ENCODE measurements at regions of chr11 and their contacts with region 1.

Region 1: GRCh38 chr11:76807206-76807875 is 24.2 kb downstream of the TSKU start:
- DNase-seq: peak; percentile 85 to 86
- H3K4me3 ChIP-seq: no peak overlapping the region
- H3K4me3 Mint-ChIP-seq: no peak overlapping the region
- H3K27ac Mint-ChIP-seq: no peak overlapping the region
- H3K4me1 ChIP-seq: peaks cover 8% of the 10 kb centered on the region
- H3K4me1 Mint-ChIP-seq: peaks cover under 1% of the 10 kb centered on the region
- H3K27me3 ChIP-seq: no peaks in the 10 kb centered on the region
- H3K27me3 Mint-ChIP-seq: no peaks in the 10 kb centered on the region
- CTCF ChIP-seq: peak; percentile 86 to 87

Region 2: DNA sequence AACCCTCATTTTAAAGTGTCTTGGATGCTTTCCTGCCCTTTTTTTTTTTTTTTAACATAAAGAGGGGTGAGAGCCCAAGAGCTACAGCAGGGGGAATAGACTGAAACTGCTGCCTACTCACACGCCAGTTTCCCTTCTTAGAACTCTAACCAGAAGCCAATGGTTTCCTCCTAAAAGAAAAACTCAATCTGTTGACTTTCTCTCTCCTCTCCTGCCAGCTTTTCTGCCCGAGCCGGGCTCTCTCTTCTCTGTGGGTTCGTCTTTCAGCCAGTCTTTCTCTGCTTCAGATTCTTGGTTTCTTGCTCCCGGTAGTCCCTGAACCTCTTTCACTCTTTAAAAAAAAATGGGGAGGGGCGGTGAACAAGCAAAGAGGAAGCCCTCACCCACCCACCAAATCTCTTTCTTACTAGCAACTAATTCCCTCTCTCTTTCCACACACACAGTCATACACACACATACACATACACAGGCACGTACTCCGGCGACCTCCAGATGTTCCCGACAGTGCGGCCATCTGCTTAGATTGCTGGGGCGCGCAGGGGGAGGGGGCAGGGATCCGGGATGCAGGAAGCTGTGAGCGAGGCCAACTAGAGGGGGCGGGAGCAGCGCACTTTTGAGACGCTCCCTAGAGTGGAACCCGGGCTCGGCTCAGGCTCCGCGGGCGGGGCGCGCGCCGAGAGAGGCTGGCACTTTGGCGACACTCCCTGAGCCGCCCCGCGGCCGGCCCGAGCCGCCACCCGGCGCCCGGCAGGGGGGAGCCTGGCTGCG is 24.6 kb before region 1 on chr11:
- CTCF ChIA-PET with region 1: no interaction called
- POLR2A ChIA-PET with region 1: no interaction called
- intact Hi-C with region 1: no loop called
- DNase-seq: peak; percentile 98
- H3K4me3 ChIP-seq: peak overlapping the region; percentile 85
- H3K4me3 Mint-ChIP-seq: peak overlapping the region; percentile 79
- H3K27ac Mint-ChIP-seq: peak overlapping the region; percentile 71
- H3K4me1 ChIP-seq: peaks cover 31% of the 10 kb centered on the region
- H3K4me1 Mint-ChIP-seq: peaks cover 46% of the 10 kb centered on the region
- H3K27me3 ChIP-seq: no peaks in the 10 kb centered on the region
- H3K27me3 Mint-ChIP-seq: no peaks in the 10 kb centered on the region
- CTCF ChIP-seq: no peak

Region 3: GRCh38 chr11:76838678-76839068 is 31.3 kb after region 1 on chr11:
- CTCF ChIA-PET with region 1: no interaction called
- POLR2A ChIA-PET with region 1: no interaction called
- intact Hi-C with region 1: loop called (anchors 2 kb)
- DNase-seq: peak; percentile 71 to 73
- H3K4me3 ChIP-seq: no peak overlapping the region
- H3K4me3 Mint-ChIP-seq: no peak overlapping the region
- H3K27ac Mint-ChIP-seq: no peak overlapping the region
- H3K4me1 ChIP-seq: peaks cover 13% of the 10 kb centered on the region
- H3K4me1 Mint-ChIP-seq: peaks cover 19% of the 10 kb centered on the region
- H3K27me3 ChIP-seq: no peaks in the 10 kb centered on the region
- H3K27me3 Mint-ChIP-seq: peaks cover 4% of the 10 kb centered on the region
- CTCF ChIP-seq: peak; percentile 35 to 78

Measured in Caco-2 (cell line).